ENCODE measurements at regions of chr15 and their contacts with region 1.

Region 1: GRCh38 chr15:90624278-90624981 is 92.7 kb upstream of the BLM start:
- DNase-seq: peak; percentile 79

Region 2: DNA sequence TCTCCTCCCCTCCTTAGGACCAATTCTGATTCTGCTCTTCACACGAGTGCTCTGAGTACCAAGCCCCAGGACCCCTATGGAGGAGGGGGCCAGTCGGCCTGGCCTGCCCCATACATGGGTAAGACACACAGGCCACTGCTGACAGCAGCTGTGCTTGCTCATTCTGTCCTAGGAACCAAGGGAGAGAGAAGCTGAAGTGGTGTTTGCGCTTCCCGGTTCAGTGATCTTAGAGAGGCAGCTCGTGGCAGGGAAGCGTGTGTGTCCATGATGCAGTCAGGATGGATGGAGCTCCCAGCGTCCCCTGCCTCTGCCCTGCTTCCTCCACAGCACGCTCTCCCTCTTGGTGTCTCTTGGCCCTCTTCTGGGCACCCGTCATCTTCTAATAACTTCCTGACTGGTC is 17.1 kb before region 1 on chr15:
- intact Hi-C with region 1: loop called in 1 of 2 experiments (anchors 1 kb)
- DNase-seq: no peak

Measured in posterior vena cava (tissue), 2 donors.